Heart left ventricle (tissue), 16 donors: ENCODE measurements at regions of chr20 and their contacts with region 1.

Region 1: GRCh38 chr20:11274141-11274594 is 600.4 kb upstream of the JAG1 start:
- DNase-seq: peak in 3 of 5 donors; percentile 35 to 44 (median 35)
- ATAC-seq: peak; percentile 61 to 91 (median 90)
- H3K4me3 ChIP-seq: no peak overlapping the region
- H3K27ac ChIP-seq: no peak overlapping the region
- H3K4me1 ChIP-seq: peaks cover 0 to 10% (median 2%) of the 10 kb centered on the region in 12 donors
- H3K27me3 ChIP-seq: no peaks in the 10 kb centered on the region
- CTCF ChIP-seq: peak; percentile 40 to 84 (median 72)
- POLR2A ChIP-seq: no peak

Region 2: DNA sequence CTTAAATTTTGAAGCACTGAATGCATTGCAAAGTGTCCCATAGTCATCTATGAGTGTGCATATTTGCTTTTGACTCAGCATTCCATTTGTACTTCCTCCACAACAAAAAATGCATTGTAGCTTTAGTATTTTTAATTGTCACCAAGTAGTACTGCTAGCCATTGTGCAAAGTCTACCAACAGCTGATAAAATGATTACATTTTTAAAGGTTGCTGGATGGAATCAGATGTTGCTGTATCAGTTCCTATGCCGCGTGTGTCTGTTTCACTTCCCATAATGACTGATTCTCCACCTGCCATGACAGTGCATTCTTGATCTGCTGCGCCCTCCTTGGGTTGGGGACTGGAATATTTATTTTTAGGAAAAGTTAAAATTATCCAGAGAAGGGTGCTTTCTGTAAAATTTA is 797.8 kb before region 1 on chr20:
- intact Hi-C with region 1: loop called in 3 of 10 experiments (anchors 5 kb)
- DNase-seq: no peak
- ATAC-seq: peak in 3 of 4 donors; percentile 22 to 57 (median 52)
- H3K4me3 ChIP-seq: no peak overlapping the region
- H3K27ac ChIP-seq: peak overlapping the region in 1 of 12 donors; percentile 67
- H3K4me1 ChIP-seq: peaks cover 0 to 40% (median 12%) of the 10 kb centered on the region in 12 donors
- H3K27me3 ChIP-seq: no peaks in the 10 kb centered on the region
- CTCF ChIP-seq: no peak
- POLR2A ChIP-seq: no peak

Region 3: DNA sequence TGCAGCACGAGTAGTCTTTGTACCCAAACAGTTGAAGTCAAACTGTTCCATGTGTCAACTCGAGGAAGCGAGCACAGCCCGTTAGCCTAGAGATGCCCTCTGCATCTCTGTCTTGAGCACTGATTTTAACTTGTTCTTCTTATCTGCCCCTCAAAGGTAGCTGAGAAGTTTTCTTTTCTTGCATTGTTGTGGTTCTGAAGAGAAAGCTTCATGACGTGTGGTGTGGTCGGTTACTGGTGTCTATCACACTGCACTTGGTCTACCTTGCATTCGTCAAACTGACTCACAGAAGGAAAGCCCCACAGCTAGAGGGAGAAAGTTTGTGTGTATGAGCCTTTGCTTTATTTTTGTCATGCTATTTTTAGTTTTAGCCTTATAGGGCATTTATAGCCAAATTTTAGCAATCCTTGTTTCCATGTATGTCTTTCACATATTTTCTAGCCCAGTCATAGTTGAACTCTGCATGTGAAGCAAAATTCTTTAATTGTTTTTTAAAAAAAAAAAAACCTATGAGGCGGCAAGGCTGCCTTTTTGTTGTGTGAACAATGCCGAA is 715.5 kb before region 1 on chr20:
- intact Hi-C with region 1: loop called in 9 of 10 experiments (anchors 2 to 5 kb)
- DNase-seq: no peak
- ATAC-seq: peak in 1 of 4 donors; percentile 24
- H3K4me3 ChIP-seq: no peak overlapping the region
- H3K27ac ChIP-seq: peak overlapping the region in 6 of 12 donors; percentile 16 to 36 (median 30)
- H3K4me1 ChIP-seq: peaks cover 0 to 13% (median 0%) of the 10 kb centered on the region in 12 donors
- H3K27me3 ChIP-seq: no peaks in the 10 kb centered on the region
- CTCF ChIP-seq: peak in 2 of 12 donors; percentile 7 to 33
- POLR2A ChIP-seq: no peak

Region 4: GRCh38 chr20:10654630-10655029 is 619.5 kb before region 1 on chr20:
- intact Hi-C with region 1: loop called in 1 of 10 experiments (anchors 5 kb)
- DNase-seq: no peak
- ATAC-seq: peak; percentile 27 to 29 (median 28)
- H3K4me3 ChIP-seq: peak overlapping the region in 1 of 12 donors; percentile 9
- H3K27ac ChIP-seq: peak overlapping the region in 11 of 12 donors; percentile 54 to 80 (median 65)
- H3K4me1 ChIP-seq: peaks cover 11 to 99% (median 77%) of the 10 kb centered on the region in 12 donors
- H3K27me3 ChIP-seq: no peaks in the 10 kb centered on the region
- CTCF ChIP-seq: no peak
- POLR2A ChIP-seq: no peak

Region 5: GRCh38 chr20:10667077-10667401 is 607.1 kb before region 1 on chr20:
- intact Hi-C with region 1: loop called in 8 of 10 experiments (anchors 5 to 10 kb)
- DNase-seq: peak; percentile 52 to 75 (median 60)
- ATAC-seq: peak in 2 of 4 donors; percentile 5 to 21
- H3K4me3 ChIP-seq: peak overlapping the region in 9 of 12 donors; percentile 19 to 98 (median 34)
- H3K27ac ChIP-seq: peak overlapping the region in 11 of 12 donors; percentile 20 to 78 (median 63)
- H3K4me1 ChIP-seq: peaks cover 10 to 81% (median 60%) of the 10 kb centered on the region in 12 donors
- H3K27me3 ChIP-seq: no peaks in the 10 kb centered on the region
- CTCF ChIP-seq: no peak
- POLR2A ChIP-seq: no peak